Caco-2 (cell line): ENCODE measurements at regions of chr12 and their contacts with region 1.

Region 1: GRCh38 chr12:105053116-105053572 is 31.1 kb downstream of the ALDH1L2 start:
- DNase-seq: peak; percentile 59 to 71
- H3K4me3 ChIP-seq: no peak overlapping the region
- H3K4me3 Mint-ChIP-seq: no peak overlapping the region
- H3K27ac Mint-ChIP-seq: no peak overlapping the region
- H3K4me1 ChIP-seq: no peaks in the 10 kb centered on the region
- H3K4me1 Mint-ChIP-seq: no peaks in the 10 kb centered on the region
- H3K27me3 ChIP-seq: no peaks in the 10 kb centered on the region; the same call in 1 of the 2 replicates
- H3K27me3 Mint-ChIP-seq: no peaks in the 10 kb centered on the region
- CTCF ChIP-seq: peak; percentile 76 to 87

Region 2: GRCh38 chr12:104201238-104202001 is 851.7 kb before region 1 on chr12:
- CTCF ChIA-PET with region 1: no interaction called
- POLR2A ChIA-PET with region 1: no interaction called
- intact Hi-C with region 1: loop called (anchors 2 kb)
- DNase-seq: peak; percentile 51 to 58
- H3K4me3 ChIP-seq: no peak overlapping the region
- H3K4me3 Mint-ChIP-seq: no peak overlapping the region
- H3K27ac Mint-ChIP-seq: no peak overlapping the region
- H3K4me1 ChIP-seq: no peaks in the 10 kb centered on the region
- H3K4me1 Mint-ChIP-seq: no peaks in the 10 kb centered on the region
- H3K27me3 ChIP-seq: no peaks in the 10 kb centered on the region
- H3K27me3 Mint-ChIP-seq: peaks cover 10% of the 10 kb centered on the region
- CTCF ChIP-seq: peak; percentile 70 to 76

Region 3: DNA sequence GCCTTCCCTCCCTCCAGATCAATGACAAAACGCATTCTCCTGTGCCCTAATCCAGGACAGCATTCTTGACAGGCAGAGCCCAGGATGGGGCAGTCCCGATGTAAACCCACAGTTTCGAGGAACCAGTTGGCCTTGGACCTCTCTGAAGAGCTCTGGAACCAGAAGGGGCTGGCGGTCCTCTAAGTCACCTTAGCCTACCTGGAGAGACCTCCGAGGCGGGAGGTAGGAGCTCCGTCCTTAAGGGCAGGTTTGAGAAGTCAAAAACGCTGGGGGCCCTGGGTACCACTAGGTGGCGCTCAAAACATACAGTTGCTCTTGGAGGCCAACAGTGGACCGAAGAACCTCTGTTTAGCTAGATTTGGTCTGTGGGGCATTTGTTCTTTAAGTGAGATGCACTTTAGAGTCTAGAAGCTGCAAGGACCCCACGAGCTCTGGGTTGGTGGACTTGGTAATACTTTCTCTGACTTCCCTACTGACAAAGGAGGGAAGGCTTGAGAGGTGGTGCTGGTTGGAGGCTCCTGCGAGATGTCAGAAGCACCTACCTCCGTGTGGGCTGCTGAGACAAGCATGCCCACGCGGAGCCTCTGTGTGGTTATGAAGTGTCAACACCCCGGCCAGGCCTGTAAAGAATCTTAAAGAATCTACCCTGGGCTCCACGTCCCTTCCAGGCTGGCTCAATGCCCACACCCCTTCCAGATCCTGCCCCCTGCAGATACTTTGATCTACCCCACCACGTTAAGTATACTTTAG is 671.2 kb before region 1 on chr12:
- CTCF ChIA-PET with region 1: interaction called, 15 read pairs
- POLR2A ChIA-PET with region 1: no interaction called
- intact Hi-C with region 1: loop called (anchors 1 kb)
- DNase-seq: peak; percentile 74 to 81
- H3K4me3 ChIP-seq: no peak overlapping the region
- H3K4me3 Mint-ChIP-seq: no peak overlapping the region
- H3K27ac Mint-ChIP-seq: no peak overlapping the region
- H3K4me1 ChIP-seq: no peaks in the 10 kb centered on the region
- H3K4me1 Mint-ChIP-seq: peaks cover 6% of the 10 kb centered on the region
- H3K27me3 ChIP-seq: no peaks in the 10 kb centered on the region
- H3K27me3 Mint-ChIP-seq: peaks cover 5% of the 10 kb centered on the region
- CTCF ChIP-seq: peak; percentile 89 to 94

Region 4: DNA sequence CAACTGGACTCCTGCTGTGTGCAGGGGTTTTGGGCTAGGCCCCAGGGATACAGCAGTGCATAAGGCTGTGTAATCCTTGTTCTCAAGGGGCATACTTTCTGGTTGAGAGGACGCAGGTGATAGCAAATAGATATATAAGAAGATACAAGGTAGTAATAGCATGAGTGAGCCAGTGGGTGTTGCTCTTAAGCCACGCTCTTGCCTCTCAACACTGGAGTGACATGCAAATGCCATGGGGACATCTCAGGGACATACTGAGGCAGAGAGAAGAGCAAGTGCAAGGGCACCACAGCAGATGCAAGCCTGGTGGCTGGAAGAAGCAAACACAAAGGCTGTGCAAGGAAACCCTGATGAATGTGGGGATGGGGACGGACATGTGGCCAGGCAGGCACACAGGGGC is 373.1 kb before region 1 on chr12:
- CTCF ChIA-PET with region 1: no interaction called
- POLR2A ChIA-PET with region 1: no interaction called
- intact Hi-C with region 1: loop called (anchors 1 kb)
- DNase-seq: peak in 1 of 2 experiments; percentile 11
- H3K4me3 ChIP-seq: no peak overlapping the region
- H3K4me3 Mint-ChIP-seq: no peak overlapping the region
- H3K27ac Mint-ChIP-seq: no peak overlapping the region
- H3K4me1 ChIP-seq: peaks cover 18% of the 10 kb centered on the region
- H3K4me1 Mint-ChIP-seq: peaks cover 13% of the 10 kb centered on the region
- H3K27me3 ChIP-seq: no peaks in the 10 kb centered on the region
- H3K27me3 Mint-ChIP-seq: no peaks in the 10 kb centered on the region
- CTCF ChIP-seq: peak in 1 of 2 experiments; percentile 20

Region 5: DNA sequence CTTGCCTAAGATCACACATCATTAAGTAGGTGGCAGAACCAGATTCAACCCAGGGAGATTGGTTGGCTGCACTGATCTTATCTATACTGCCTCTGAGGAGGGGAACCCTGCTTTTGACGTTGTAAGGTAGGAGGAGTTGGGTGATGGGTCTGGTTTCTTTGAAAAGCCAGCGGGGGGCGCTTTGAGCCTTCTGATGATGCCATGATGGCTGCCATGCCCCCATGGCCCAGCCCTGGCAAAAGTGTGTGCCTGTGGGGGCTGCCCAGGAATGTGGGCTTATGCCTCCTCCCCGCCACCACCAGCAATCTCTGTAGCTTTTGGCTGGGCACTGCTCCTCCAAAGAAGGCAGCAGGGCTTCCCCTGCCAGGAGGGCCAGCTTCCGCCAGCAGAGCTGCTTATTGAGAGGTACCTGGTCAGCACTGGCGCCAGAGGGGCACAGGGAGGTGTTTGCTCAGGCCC is 319.4 kb before region 1 on chr12:
- CTCF ChIA-PET with region 1: no interaction called
- POLR2A ChIA-PET with region 1: no interaction called
- intact Hi-C with region 1: loop called (anchors 1 kb)
- DNase-seq: peak in 1 of 2 experiments; percentile 12
- H3K4me3 ChIP-seq: no peak overlapping the region
- H3K4me3 Mint-ChIP-seq: no peak overlapping the region
- H3K27ac Mint-ChIP-seq: no peak overlapping the region
- H3K4me1 ChIP-seq: no peaks in the 10 kb centered on the region
- H3K4me1 Mint-ChIP-seq: no peaks in the 10 kb centered on the region
- H3K27me3 ChIP-seq: no peaks in the 10 kb centered on the region
- H3K27me3 Mint-ChIP-seq: peaks cover 10% of the 10 kb centered on the region
- CTCF ChIP-seq: no peak

Region 6: DNA sequence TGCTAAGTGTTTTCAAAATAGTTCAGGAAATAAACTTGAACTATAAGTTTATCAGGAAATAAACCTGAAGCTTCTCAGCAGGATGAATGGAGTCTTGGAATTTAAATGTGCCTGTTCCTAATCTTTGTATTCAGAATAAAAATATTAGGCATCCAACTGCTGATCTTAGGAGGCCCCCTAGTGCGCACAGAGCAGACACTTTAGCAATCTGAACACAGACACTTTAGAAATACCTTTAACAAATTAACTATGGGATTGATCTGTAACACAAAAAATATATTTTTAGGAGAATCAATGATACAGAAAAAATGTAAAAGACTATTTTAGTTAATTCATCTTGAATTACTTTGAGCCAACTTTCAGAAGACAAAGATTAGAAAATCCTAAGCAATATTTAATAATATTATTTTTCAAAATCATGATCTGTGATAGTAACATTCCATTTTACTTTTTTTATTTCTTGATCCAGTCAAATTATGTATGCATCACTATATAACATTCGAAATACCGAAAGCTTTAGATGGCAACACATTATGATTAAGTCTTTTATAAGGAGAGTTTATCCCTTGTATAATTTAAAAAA is 175.9 kb before region 1 on chr12:
- CTCF ChIA-PET with region 1: no interaction called
- POLR2A ChIA-PET with region 1: no interaction called
- intact Hi-C with region 1: loop called (anchors 10 kb)
- DNase-seq: peak in 1 of 2 experiments; percentile 21
- H3K4me3 ChIP-seq: no peak overlapping the region
- H3K4me3 Mint-ChIP-seq: no peak overlapping the region
- H3K27ac Mint-ChIP-seq: no peak overlapping the region
- H3K4me1 ChIP-seq: no peaks in the 10 kb centered on the region
- H3K4me1 Mint-ChIP-seq: no peaks in the 10 kb centered on the region
- H3K27me3 ChIP-seq: no peaks in the 10 kb centered on the region
- H3K27me3 Mint-ChIP-seq: no peaks in the 10 kb centered on the region
- CTCF ChIP-seq: peak; percentile 47 to 49

Region 7: GRCh38 chr12:104986022-104986941 is 66.9 kb before region 1 on chr12 and contains the start of gene NOPCHAP1:
- CTCF ChIA-PET with region 1: no interaction called
- POLR2A ChIA-PET with region 1: no interaction called
- intact Hi-C with region 1: loop called (anchors 2 kb)
- DNase-seq: peak; percentile 93 to 95
- H3K4me3 ChIP-seq: peak within 1 kb of the TSS; percentile 80
- H3K4me3 Mint-ChIP-seq: peak within 1 kb of the TSS; percentile 88
- H3K27ac Mint-ChIP-seq: peak within 1 kb of the TSS; percentile 79
- H3K4me1 ChIP-seq: peaks cover 7% of the 10 kb centered on the region; the same call in 1 of the 2 replicates
- H3K4me1 Mint-ChIP-seq: peaks cover 20% of the 10 kb centered on the region
- H3K27me3 ChIP-seq: no peaks in the 10 kb centered on the region
- H3K27me3 Mint-ChIP-seq: no peaks in the 10 kb centered on the region
- CTCF ChIP-seq: no peak
- total RNA-seq, gene NOPCHAP1: 23.0 TPM in 2 replicates

Region 8: GRCh38 chr12:104998423-104999346 is 54.5 kb before region 1 on chr12:
- CTCF ChIA-PET with region 1: no interaction called
- POLR2A ChIA-PET with region 1: no interaction called
- intact Hi-C with region 1: no loop called
- DNase-seq: no peak
- H3K4me3 ChIP-seq: no peak overlapping the region
- H3K4me3 Mint-ChIP-seq: no peak overlapping the region
- H3K27ac Mint-ChIP-seq: no peak overlapping the region
- H3K4me1 ChIP-seq: no peaks in the 10 kb centered on the region
- H3K4me1 Mint-ChIP-seq: no peaks in the 10 kb centered on the region
- H3K27me3 ChIP-seq: no peaks in the 10 kb centered on the region
- H3K27me3 Mint-ChIP-seq: no peaks in the 10 kb centered on the region
- CTCF ChIP-seq: no peak

Region 9: DNA sequence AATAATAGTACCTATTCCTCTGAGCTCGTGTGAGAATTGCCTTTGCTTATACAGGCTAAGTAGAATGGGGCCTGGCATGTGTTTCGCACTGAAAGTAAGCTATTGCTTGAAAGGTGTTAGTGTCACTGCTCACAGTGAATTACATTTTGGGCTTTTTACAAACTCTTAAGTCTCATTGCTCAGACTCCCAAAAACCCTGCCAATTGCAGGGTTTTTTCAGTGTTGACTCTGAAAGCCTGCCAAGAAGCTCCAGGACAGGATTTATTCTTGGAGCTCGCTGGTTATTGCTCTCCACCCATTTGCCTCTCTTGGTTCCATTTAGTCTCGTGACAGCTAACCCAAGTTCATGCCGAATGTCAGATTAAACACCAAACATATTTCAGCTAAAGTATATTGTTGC is 27.3 kb before region 1 on chr12:
- CTCF ChIA-PET with region 1: no interaction called
- POLR2A ChIA-PET with region 1: no interaction called
- intact Hi-C with region 1: no loop called
- DNase-seq: no peak
- H3K4me3 ChIP-seq: no peak overlapping the region
- H3K4me3 Mint-ChIP-seq: no peak overlapping the region
- H3K27ac Mint-ChIP-seq: no peak overlapping the region
- H3K4me1 ChIP-seq: no peaks in the 10 kb centered on the region
- H3K4me1 Mint-ChIP-seq: peaks cover 5% of the 10 kb centered on the region
- H3K27me3 ChIP-seq: no peaks in the 10 kb centered on the region
- H3K27me3 Mint-ChIP-seq: no peaks in the 10 kb centered on the region
- CTCF ChIP-seq: no peak